ENCODE measurements at regions of chr10 and their contacts with region 1.

Region 1: DNA sequence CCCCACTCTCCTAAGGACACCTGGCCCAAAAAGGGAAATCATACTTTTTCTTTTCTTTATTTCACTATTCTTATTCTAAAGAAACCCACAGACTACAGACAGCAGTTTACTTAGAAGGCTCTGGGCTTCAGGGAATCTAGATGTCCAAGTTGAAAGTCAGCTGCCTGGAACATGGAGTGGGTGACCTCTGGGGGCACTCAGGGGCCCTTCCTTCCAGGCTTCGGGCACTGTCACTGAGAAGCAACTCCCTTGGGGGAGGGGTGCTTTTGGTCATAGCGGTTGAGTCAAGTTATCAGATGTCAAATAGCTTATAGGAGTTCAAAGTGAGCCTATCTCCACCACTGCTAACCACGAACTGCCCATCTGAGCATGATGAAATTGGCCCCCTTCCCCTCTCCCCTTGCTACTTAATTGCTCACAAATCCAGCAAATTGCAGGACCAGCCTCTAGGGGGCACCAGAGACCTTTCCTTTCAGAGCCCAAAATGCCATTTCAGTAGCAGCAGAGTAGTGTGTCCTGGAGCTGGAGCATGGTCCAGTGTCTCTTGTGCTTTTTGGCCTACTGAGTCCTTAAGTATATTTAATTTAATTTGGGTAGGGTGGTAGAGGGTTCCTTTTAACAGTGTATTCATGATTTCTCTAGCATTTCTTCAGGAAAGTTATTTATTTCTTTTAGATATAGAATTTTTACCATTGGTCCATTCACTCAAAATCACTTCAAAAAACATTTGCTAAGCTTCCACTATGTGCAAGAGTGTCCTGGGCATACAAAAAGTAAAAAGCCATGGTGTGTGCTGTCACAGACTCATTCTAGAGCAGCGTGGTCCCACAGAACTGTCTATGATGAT is 463.8 kb downstream of the KCNMA1 start:
- DNase-seq: peak; percentile 76 to 86
- ATAC-seq: peak; percentile 88
- H3K4me3 ChIP-seq: no peak overlapping the region
- H3K27ac ChIP-seq: no peak overlapping the region
- H3K4me1 ChIP-seq: peaks cover 0 to 2% of the 10 kb centered on the region in 2 donors
- H3K27me3 ChIP-seq: no peaks in the 10 kb centered on the region

Region 2: DNA sequence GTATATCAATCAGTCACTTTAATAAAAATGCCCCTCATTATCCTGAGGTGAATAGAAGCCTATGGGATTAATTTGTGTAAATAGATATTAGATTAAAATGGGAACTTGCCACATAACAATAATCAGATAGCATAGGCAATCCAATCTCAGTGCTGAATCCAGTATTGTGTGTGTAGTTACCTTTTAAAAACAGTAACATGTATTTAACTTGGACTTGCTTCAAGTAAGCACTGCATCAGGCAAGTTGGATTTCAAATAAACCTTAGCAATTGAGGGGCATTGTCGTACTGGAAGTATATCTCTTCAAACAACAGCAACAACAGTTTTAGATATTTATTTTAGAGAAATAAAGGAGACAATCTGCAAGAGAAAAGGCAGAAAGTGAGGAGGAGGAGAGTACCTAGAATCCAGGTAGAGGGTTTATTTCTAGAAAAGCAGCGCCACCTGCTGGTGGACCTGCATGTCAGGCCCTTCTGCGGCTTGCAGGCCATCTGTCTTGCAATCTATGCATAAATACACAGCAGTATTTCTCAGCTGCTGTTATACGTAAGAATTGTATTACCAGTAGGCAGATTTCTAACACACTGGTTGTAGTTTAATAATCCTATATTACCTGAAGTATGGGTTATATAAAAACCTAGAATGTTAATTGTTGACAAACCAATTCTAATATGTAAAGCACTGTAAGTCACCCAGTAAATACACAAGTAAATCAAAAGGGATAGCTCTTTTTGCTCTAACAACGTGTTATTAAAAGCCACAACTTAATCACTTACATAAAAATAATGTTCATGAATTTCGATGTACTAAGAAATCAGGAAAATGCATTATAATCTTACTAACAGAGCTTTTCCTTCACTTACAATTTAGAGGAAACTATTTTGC is 189.0 kb before region 1 on chr10:
- intact Hi-C with region 1: no loop called
- DNase-seq: peak; percentile 71 to 86
- ATAC-seq: peak; percentile 80
- H3K4me3 ChIP-seq: no peak overlapping the region
- H3K27ac ChIP-seq: no peak overlapping the region
- H3K4me1 ChIP-seq: no peaks in the 10 kb centered on the region
- H3K27me3 ChIP-seq: no peaks in the 10 kb centered on the region

Region 3: DNA sequence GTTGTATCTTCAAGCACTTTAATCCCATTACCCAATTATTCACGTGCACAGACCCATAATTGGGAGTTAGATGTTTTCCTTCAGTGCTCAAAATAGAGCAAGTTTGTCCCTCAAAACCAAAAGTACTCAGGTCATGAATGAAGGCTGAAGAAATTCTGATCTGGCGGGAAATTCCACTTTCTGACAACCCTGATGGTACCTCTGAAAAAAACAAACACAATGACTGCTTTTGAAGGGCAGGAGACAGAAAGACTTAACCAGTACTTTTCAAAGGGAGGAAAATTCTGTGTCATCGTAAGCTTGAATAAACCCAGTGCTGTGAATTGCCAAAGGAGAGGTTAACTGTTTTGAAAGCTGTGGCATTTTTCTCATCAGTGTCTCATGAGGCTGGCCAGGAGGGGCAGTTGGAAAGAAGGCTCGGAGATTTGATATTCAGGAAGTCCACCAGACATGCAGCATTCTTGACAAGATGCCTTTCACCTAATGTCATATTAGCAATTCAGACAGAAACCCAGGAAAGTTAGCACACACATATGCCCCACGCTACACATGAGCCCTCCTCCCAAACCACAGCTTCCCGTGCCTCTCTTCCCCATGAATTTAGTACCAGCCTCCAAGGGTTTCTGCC is 116.8 kb after region 1 on chr10:
- intact Hi-C with region 1: loop called in 1 of 2 experiments (anchors 10 kb)
- DNase-seq: no peak
- ATAC-seq: no peak
- H3K4me3 ChIP-seq: no peak overlapping the region
- H3K27ac ChIP-seq: no peak overlapping the region
- H3K4me1 ChIP-seq: peaks cover 9 to 39% of the 10 kb centered on the region in 2 donors
- H3K27me3 ChIP-seq: no peaks in the 10 kb centered on the region

Region 4: DNA sequence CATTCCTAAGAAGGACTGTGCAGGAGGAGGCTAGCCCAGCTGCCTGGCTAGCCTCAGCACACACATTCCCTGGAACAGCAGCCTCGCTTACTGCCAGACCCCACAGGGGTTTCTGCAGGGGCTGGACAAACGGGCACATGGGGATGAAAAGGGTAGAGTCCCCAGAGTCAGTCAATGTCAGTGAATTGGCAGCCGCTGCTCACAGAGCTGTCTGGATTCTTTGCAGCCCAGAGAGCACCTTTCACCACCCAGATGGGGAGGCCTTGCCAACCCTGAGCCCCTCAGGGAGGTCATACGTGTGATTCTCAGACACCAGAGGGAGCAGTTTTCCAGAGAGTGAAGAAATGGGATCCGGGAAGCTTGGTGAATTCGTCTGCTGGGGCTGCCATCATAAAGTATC is 320.5 kb after region 1 on chr10:
- intact Hi-C with region 1: loop called in 1 of 2 experiments (anchors 10 kb)
- DNase-seq: no peak
- ATAC-seq: no peak
- H3K4me3 ChIP-seq: no peak overlapping the region
- H3K27ac ChIP-seq: no peak overlapping the region
- H3K4me1 ChIP-seq: peaks cover 0 to 6% of the 10 kb centered on the region in 2 donors
- H3K27me3 ChIP-seq: no peaks in the 10 kb centered on the region

Region 5: DNA sequence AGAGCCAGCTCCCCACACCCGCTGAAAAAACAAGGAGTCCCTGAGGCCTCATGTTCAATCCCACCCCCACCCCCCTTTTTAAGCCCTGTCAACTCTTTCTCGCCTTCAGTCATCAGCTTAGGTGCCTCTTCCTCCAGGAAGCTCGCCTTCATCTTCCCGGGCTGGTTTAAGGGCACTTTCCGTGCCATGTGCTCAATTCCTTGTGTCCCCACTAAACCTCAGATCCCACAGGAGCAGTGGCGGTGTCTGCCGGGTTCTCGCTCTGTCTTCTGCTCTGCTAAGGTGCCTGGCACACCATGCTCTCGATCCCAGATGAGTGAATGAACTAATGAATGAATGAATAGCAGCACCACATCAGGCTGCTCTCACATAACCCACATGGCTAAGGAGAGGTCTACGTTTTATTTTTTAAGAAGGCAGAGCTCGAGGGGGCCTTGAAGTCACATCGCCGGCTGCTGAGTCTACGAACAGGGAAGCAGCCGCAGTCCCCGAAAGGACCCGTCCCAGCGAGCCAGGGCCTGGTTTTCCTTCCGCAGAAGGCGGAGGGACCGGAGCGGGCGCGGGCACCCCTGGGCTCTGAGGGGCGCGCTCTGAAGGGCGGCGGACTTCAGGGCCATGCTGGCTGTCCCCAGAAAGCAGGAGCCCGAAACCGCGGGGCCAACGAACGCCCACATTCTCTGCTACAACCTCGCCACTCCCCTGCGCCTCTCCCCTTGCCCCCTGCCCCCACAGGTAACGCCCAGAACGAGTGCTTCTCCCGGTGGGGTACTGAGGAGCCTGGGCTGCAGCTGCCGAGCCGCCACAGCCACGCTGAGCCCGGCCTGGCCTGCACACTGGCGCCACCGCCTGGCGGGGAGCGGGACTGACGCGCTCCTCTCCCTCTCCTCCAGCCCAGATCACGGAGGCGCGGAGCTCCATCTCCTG is 537.2 kb after region 1 on chr10:
- intact Hi-C with region 1: loop called in 1 of 2 experiments (anchors 5 kb)
- DNase-seq: peak; percentile 81 to 94
- ATAC-seq: peak; percentile 94
- H3K4me3 ChIP-seq: peak overlapping the region; percentile 6 to 28
- H3K27ac ChIP-seq: no peak overlapping the region
- H3K4me1 ChIP-seq: no peaks in the 10 kb centered on the region
- H3K27me3 ChIP-seq: no peaks in the 10 kb centered on the region

Region 6: DNA sequence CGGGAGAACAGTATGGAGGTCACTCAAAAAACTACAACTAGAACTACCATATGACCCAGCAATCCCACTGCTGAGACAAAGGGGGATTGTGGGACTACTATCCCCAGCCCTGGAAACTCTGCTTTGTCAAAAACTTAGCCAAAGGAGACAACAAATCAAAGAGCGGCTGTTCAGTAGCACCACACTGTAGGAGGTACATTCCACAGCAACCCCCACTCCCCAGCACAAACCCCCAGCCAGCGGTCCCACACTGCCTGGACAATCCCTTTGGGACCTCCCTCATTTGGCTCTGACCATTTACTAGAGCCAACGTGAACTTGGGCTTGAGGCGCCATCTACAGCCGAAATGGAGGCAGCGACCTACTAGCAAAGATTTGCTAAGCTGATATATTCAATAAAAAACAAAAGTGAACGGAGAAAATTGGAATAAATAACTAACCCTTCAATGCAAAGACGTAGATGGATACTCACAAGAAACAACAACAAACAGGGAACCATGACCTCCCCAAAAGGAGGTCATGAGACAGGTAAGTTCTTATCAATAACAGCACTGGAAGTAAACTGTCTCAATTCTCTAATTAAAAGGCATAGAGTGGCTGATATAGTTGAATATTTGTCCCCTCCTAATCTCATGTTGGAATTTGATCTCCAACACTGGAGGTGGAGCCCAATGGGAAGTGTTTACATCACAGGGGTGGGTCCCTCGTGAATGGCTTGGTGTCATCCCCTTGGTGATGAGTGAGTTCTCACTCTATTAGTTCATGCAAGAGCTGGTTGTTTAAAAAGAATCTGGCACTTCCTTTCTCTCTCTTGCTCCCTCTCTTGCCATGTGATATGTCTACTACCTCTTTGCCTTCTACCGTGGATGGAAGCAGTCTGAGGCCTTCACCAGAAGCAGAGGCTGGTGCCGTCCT is 582.7 kb after region 1 on chr10:
- intact Hi-C with region 1: loop called (anchors 5 kb)
- DNase-seq: no peak
- ATAC-seq: no peak
- H3K4me3 ChIP-seq: no peak overlapping the region
- H3K27ac ChIP-seq: no peak overlapping the region
- H3K4me1 ChIP-seq: no peaks in the 10 kb centered on the region
- H3K27me3 ChIP-seq: no peaks in the 10 kb centered on the region

Measured in aorta (tissue), 5 donors.